Dorsolateral prefrontal cortex (tissue), 120 donors: ENCODE measurements at regions of chr7 and their contacts with region 1.

Region 1: DNA sequence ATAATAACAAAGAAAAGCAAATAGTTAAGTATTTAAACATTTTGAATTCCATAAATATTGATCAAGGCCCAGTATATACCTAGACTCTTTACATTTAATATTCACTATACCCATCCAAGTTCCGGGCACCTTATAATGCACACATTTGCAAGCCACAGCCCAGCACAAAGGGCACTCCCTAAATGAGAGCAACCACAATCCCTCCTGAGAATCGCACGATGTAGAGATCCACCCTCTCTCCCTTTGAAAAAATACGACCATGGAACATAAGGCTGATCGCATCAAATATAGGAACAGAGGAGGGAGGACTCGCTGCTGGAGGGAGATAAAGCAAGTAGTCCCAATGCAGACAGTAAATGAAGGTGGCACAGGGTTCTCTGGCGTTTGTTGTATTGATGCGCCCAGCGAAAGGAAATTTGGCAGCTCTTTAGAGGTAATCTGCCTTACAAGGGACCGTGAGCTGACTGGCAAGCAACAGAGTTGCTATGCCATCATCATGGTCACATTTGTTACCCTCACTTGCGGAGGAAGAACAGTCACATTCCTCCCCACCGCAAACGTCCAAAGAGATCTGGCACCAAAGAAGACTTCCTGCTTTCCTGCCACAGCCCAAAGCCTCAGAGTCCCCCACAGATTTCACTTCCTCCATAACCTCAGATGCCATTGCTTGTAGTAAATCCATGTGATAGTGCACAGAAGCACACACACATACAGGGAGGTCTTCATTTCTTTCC is 16.1 kb upstream of the TAS2R40 start:
- DNase-seq: peak in 1 of 10 donors; percentile 39
- H3K4me3 ChIP-seq: no peak overlapping the region
- H3K27ac ChIP-seq: no peak overlapping the region
- H3K27me3 ChIP-seq: no peaks in the 10 kb centered on the region
- CTCF ChIP-seq: no peak

Region 2: GRCh38 chr7:142646386-142647140 is 559.2 kb before region 1 on chr7:
- intact Hi-C with region 1: no loop called
- DNase-seq: peak in 1 of 10 donors; percentile 63
- H3K4me3 ChIP-seq: peak overlapping the region in 3 of 59 donors; percentile 9 to 23 (median 18)
- H3K27ac ChIP-seq: no peak overlapping the region
- H3K27me3 ChIP-seq: peaks cover 0 to 52% (median 11%) of the 10 kb centered on the region in 45 donors
- CTCF ChIP-seq: no peak

Region 3: GRCh38 chr7:142880876-142881505 is 324.7 kb before region 1 on chr7:
- intact Hi-C with region 1: loop called in 1 of 2 experiments (anchors 10 kb)
- DNase-seq: peak in 1 of 10 donors; percentile 32
- H3K4me3 ChIP-seq: no peak overlapping the region
- H3K27ac ChIP-seq: no peak overlapping the region
- H3K27me3 ChIP-seq: peaks cover 0 to 2% (median 0%) of the 10 kb centered on the region in 45 donors
- CTCF ChIP-seq: peak; percentile 33 to 73 (median 62)

Region 4: DNA sequence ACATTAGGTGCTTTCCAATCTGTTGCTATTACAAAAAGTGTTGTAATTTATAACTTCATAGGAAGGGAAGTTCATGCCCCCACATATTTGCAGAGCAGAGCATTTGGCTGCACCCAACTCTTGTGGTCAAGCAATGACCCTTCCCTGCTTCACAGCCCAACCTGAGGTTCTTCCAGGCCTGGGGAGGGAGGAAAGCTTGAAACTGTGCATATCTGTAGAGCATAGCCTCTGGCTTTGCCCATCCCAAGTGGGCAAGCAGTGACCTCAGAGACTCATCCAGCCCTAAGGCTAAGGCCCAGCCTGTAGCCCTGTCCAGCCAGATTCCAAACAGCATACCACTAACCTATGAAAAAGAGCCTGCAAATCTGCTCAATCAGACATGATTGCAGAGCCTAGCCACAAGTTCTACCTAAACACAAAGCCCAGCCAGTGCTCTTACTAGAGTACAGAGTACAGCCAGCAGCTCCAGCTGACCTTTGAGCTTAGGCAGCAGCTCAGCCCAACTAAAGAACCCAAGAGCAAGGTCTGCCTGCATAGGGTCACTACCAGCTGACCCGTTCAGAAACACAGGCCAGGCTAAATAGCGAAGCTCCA is 43.1 kb after region 1 on chr7:
- intact Hi-C with region 1: no loop called
- DNase-seq: no peak
- H3K4me3 ChIP-seq: no peak overlapping the region
- H3K27ac ChIP-seq: no peak overlapping the region
- H3K27me3 ChIP-seq: no peaks in the 10 kb centered on the region
- CTCF ChIP-seq: no peak

Region 5: DNA sequence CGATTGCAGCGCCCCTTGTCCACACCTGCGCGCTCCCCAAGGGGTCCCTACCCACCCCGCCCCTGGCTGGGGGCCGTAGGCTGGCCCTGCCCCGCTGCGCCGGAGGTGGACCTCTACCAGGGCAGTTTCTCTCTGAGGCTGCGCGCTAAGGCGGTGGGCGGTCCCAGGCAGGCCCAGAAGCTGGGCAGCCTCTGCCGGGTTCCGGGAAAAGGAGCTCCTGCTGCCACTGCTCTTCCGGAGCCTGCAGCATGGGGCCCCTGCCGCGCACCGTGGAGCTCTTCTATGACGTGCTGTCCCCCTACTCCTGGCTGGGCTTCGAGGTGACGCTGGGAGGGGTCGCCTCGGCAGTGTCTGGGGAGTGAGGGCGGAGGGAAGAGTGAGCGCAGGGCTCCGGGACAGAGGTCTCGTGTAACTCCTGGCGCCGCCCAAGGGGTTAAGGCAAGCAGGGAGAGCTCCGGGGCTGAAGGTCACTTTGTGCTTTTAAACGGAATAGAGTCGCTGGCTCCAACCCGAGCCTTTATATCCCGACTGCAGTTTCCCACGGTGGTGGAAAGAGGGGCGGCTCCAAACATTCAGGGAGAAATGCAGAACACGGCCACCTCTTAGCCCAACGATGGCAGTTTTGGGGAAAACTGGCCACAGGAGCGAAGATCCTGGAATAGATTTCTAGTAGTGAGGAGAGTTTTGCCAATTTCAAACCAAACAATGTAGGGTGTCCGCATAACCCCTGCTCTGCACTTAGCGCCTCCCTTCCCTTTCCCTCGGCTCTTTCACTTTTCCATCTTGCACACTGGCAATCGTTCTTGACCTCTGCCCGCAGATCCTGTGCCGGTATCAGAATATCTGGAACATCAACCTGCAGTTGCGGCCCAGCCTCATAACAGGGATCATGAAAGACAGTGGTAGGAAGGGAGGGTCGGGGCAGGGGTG is 57.8 kb after region 1 on chr7 and contains the start of gene GSTK1:
- intact Hi-C with region 1: no loop called
- DNase-seq: peak; percentile 72 to 94 (median 88)
- H3K4me3 ChIP-seq: peak within 1 kb of the TSS; percentile 61 to 99 (median 86)
- H3K27ac ChIP-seq: peak within 1 kb of the TSS; percentile 11 to 97 (median 86)
- H3K27me3 ChIP-seq: no peaks in the 10 kb centered on the region
- CTCF ChIP-seq: peak in 21 of 56 donors; percentile 5 to 53 (median 18)
- total RNA-seq, gene GSTK1: 60.1 to 106 (median 86.5) TPM